ENCODE measurements at regions of chr2 and their contacts with region 1.

Region 1: DNA sequence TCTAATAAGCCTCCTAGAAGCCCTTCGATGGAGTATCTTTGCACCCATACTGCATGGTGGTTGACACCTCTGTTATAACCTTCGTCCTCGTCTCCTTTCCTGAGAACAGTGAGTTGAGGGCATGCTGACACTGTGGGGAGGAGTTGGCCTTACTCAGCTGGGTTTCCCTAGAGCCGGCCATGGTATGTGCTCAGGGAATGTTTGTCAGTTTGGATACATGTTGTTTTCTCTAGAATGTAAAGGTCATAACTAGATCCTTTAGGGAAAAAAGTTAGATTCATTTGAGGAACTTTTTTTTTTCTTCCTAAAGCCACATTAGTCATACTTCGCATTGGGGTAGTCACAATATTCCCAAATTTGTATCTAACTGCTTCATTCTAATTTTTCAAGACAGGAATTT is 106.0 kb upstream of the FOSL2 start:
- DNase-seq: no peak
- ATAC-seq: no peak

Region 2: DNA sequence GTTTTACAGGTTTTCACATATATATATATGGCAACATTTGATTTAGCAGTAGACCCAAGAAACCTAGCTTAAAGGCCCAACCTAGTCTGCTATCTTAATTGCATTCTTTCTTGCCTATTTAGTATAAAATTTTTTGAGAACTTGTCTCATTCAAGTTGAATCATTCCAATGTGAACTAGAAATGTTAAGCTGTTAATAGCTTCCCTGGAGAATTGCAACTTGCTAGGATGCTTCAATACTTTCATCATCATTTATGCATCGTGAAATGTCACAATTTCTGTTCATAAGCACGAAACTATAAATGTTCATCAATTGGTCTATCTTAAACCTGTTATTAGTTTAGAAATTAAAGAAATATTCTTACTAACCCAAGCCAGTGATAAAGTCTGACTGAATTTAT is 178.5 kb before region 1 on chr2:
- intact Hi-C with region 1: no loop called
- DNase-seq: no peak
- ATAC-seq: no peak

Region 3: DNA sequence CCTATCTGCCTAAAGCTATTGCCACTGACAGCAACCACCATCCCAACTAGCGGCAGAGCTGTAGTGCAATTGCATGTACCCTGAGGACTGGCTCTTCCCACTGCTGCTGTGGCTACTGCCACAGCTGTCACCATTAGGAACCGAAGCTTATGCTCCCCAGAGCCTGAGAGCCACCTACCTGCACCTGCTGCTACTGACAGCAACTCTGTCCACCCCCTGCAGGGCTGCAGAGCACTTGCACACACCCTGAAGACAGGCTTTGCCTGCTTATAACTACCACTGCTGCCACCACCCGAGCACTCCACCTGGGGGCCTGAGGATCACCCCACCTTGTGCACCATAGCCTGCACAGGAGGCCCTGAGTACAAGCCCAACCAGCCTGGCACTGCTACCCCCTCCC is 111.7 kb before region 1 on chr2:
- intact Hi-C with region 1: loop called in 1 of 2 experiments (anchors 10 kb)
- DNase-seq: no peak
- ATAC-seq: no peak

Region 4: GRCh38 chr2:29777161-29777560 is 1490.5 kb after region 1 on chr2:
- intact Hi-C with region 1: no loop called
- DNase-seq: no peak
- ATAC-seq: no peak